IMR-90 (cell line): ENCODE measurements at regions of chr9 and their contacts with region 1.

Region 1: DNA sequence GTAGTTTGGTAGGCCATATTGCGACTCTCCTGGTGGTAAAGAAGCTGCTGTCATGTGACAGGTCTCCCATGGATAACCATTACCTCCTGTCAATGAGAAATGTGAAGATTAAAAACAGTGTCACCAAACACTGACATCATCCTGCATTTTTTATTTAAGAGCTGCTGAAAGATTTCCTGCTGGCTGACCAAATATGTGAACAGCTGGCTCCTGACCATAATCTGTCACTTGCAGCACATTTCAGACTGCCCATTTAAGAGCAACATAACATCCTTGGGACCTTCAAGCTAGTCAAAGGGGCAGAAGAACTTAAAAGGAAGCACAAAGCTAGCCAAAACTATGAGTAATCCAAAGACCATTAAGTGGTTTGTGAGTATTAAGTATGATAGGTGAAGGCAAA is 288.0 kb downstream of the IZUMO3 start:
- DNase-seq: no peak
- ATAC-seq: no peak
- H3K4me3 ChIP-seq: no peak overlapping the region
- H3K27ac ChIP-seq: no peak overlapping the region
- H3K4me1 ChIP-seq: no peaks in the 10 kb centered on the region
- H3K27me3 ChIP-seq: no peaks in the 10 kb centered on the region
- CTCF ChIP-seq: no peak
- POLR2A ChIP-seq: no peak
- RAD21 ChIP-seq: no peak

Region 2: GRCh38 chr9:24189986-24190385 is 67.7 kb before region 1 on chr9:
- CTCF ChIA-PET with region 1: no interaction called
- POLR2A ChIA-PET with region 1: no interaction called
- dilution Hi-C with region 1: no loop called
- in situ Hi-C with region 1: no loop called
- intact Hi-C with region 1: loop called (anchors 10 kb)
- DNase-seq: no peak
- ATAC-seq: no peak
- H3K4me3 ChIP-seq: no peak overlapping the region
- H3K27ac ChIP-seq: no peak overlapping the region
- H3K4me1 ChIP-seq: no peaks in the 10 kb centered on the region
- H3K27me3 ChIP-seq: no peaks in the 10 kb centered on the region
- CTCF ChIP-seq: no peak
- POLR2A ChIP-seq: no peak
- RAD21 ChIP-seq: no peak

Region 3: DNA sequence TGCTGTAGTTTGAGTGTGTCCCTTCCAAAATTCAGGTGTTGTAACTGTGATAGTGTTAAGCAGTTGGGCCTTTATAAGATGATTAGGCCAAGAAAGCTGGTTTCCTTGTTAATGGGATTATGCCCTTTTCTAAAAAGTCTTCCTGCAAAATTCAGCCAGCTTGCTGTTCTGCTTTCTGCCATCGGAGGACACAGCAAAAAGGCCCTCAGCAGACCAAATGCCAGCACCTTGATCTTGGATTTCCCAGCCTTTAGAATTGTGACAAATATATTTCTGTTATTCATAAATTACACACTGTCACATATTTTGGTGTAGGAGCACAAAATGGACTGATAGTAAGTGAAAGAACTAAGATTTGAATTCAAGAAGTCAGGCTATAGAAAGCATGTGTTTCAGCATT is 84.7 kb after region 1 on chr9:
- CTCF ChIA-PET with region 1: no interaction called
- POLR2A ChIA-PET with region 1: no interaction called
- dilution Hi-C with region 1: no loop called
- in situ Hi-C with region 1: no loop called
- intact Hi-C with region 1: no loop called
- DNase-seq: no peak
- ATAC-seq: no peak
- H3K4me3 ChIP-seq: no peak overlapping the region
- H3K27ac ChIP-seq: no peak overlapping the region
- H3K4me1 ChIP-seq: no peaks in the 10 kb centered on the region
- H3K27me3 ChIP-seq: no peaks in the 10 kb centered on the region
- CTCF ChIP-seq: no peak
- POLR2A ChIP-seq: no peak
- RAD21 ChIP-seq: no peak